Colonic mucosa (tissue), 4 donors: ENCODE measurements at regions of chr19 and their contacts with region 1.

Region 1: DNA sequence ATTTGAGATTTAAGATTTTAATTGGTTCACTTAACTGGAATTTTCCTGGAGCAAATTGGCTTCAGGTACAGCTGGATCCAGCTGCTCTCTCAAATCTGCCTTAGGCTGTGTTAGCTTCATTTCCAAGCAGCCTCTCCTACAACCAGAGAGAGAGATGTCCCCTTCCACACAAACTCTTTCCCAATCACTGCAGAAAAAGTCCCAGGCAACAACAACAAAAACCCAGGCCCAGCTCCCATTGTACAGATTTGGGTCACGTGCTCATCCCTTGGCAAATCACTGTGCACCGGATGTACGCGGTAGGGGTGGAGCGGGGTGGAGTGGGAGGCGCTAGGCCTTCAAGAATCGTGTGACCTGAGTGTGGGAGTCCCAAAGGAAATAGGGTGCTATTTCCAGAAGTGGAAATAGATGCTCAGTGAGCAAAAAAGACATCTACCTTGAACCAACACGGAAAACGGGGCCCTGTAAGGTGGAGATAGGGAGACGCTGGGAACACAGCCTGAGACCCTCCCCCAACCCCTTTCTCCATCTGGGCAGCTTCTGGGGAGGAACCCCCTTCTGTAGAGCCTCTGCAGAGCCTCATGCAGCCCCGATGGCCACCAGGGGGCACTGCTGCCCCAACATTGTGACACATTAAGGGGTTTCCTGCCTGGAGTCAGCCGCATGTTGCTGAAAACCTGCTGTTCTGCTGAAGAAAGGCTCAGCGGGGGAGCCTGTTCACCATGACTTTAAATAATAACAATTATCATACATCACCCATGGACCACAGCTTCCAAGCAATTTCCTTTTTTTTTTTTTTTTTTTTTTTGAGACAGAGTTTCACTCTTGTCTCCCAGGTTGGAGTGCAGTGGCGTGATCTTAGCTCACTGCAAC is 25.4 kb downstream of the HPN start:
- DNase-seq: peak; percentile 93
- H3K4me3 ChIP-seq: no peak overlapping the region
- H3K27ac ChIP-seq: no peak overlapping the region
- H3K4me1 ChIP-seq: no peaks in the 10 kb centered on the region
- H3K27me3 ChIP-seq: no peaks in the 10 kb centered on the region
- CTCF ChIP-seq: peak; percentile 89

Region 2: DNA sequence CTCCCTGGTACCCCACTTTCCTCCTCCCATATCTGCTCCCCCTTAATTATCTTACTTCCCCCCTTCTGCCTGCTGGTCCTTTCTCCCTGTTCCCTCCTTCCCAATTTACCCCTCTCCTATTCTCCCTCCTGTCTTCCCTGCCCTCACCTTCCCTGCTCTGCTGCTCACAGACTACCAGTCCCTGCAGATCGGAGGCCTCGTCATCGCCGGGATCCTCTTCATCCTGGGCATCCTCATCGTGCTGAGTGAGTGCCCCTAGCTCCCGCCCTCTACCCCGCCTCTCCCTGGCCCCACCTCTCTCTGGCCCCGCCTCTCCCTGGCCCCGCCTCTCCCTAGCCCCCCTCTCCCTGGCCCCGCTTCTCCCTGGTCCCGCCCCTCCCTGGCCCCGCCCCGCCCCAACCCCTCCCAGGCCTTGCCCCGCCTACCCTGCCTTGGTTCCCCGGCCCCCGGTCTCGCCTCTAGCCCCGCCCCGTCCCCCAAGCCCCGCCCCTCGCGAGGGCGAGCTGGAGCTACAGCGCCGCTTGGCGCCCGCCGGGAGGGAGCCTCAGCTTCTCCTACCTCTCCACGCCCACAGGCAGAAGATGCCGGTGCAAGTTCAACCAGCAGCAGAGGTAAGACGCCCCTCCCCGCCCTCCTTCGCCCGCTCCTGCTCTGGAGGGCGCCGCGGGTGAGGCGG is 74.2 kb after region 1 on chr19:
- intact Hi-C with region 1: loop called (anchors 2 kb)
- DNase-seq: peak; percentile 98
- H3K4me3 ChIP-seq: peak overlapping the region; percentile 15
- H3K27ac ChIP-seq: peak overlapping the region; percentile 23
- H3K4me1 ChIP-seq: peaks cover 5% of the 10 kb centered on the region
- H3K27me3 ChIP-seq: peaks cover 7% of the 10 kb centered on the region
- CTCF ChIP-seq: no peak

Region 3: GRCh38 chr19:35184884-35185283 is 118.0 kb after region 1 on chr19:
- intact Hi-C with region 1: no loop called
- DNase-seq: no peak
- H3K4me3 ChIP-seq: no peak overlapping the region
- H3K27ac ChIP-seq: no peak overlapping the region
- H3K4me1 ChIP-seq: no peaks in the 10 kb centered on the region
- H3K27me3 ChIP-seq: no peaks in the 10 kb centered on the region
- CTCF ChIP-seq: no peak

Region 4: DNA sequence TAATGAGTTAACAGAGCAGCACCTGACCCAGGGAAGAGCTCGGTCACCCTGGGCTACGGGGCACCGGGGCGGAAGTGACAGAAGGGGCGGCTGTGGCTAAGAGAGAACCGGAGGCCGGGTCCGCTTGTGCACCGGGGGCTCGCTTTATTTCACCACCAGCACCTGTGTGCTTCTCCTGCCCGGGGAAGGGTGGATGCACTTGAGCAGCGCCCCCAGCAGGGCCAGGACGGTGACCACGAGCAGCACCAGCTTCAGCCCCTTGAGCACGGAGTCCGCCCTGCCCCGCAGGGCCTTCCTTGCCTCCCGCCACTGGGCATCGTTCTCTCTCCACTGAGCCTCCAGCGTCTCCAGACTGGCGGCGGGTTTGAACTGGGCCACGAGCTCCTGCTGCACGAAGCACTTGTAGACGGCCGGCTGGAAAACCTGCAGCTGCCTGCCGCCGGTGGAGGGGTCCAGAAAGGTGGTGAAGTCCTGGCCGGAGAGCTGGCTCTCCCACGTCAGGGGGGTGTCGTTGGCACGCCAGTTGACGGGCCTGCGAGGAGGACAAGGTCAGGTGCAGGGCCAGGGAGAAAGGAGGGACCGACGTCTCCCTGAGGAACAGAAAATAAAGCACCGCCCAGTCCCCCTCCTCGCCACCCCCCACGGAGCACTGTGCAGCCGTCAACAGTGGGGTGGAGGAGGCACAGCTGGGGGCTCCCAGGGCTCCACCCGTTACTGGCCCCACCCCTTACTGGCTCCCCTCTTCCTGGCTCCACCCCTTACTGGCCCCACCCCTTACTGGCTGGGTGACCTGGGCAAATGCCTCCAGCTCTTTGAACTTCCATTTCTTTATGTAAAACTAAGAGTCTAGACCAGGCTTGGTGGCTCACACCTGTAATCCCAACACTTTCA is 158.0 kb after region 1 on chr19:
- intact Hi-C with region 1: loop called (anchors 10 kb)
- DNase-seq: peak; percentile 79
- H3K4me3 ChIP-seq: no peak overlapping the region
- H3K27ac ChIP-seq: no peak overlapping the region
- H3K4me1 ChIP-seq: no peaks in the 10 kb centered on the region
- H3K27me3 ChIP-seq: no peaks in the 10 kb centered on the region
- CTCF ChIP-seq: no peak